ENCODE measurements at regions of chr9 and their contacts with region 1.

Region 1: GRCh38 chr9:763692-764524 is 77.6 kb upstream of the DMRT1 start:
- DNase-seq: peak in 1 of 2 experiments; percentile 61
- H3K4me3 ChIP-seq: no peak overlapping the region
- H3K27ac ChIP-seq: no peak overlapping the region
- H3K4me1 ChIP-seq: no peaks in the 10 kb centered on the region
- H3K27me3 ChIP-seq: no peaks in the 10 kb centered on the region
- CTCF ChIP-seq: no peak

Region 2: GRCh38 chr9:347667-348292 is 416.1 kb before region 1 on chr9:
- CTCF ChIA-PET with region 1: no interaction called
- POLR2A ChIA-PET with region 1: no interaction called
- intact Hi-C with region 1: loop called (anchors 1 kb)
- DNase-seq: no peak
- H3K4me3 ChIP-seq: no peak overlapping the region
- H3K27ac ChIP-seq: no peak overlapping the region
- H3K4me1 ChIP-seq: no peaks in the 10 kb centered on the region
- H3K27me3 ChIP-seq: no peaks in the 10 kb centered on the region
- CTCF ChIP-seq: peak; percentile 76

Region 3: GRCh38 chr9:385818-386398 is 378.0 kb before region 1 on chr9:
- CTCF ChIA-PET with region 1: no interaction called
- POLR2A ChIA-PET with region 1: no interaction called
- intact Hi-C with region 1: loop called (anchors 1 kb)
- DNase-seq: peak; percentile 47 to 52
- H3K4me3 ChIP-seq: no peak overlapping the region
- H3K27ac ChIP-seq: no peak overlapping the region
- H3K4me1 ChIP-seq: no peaks in the 10 kb centered on the region
- H3K27me3 ChIP-seq: no peaks in the 10 kb centered on the region
- CTCF ChIP-seq: peak; percentile 93

Measured in PC-9 (cell line).